ENCODE measurements at regions of chr4 and their contacts with region 1.

Region 1: GRCh38 chr4:36187723-36188333 is 56.5 kb downstream of the ARAP2 start:
- DNase-seq: peak; percentile 1
- H3K4me3 ChIP-seq: no peak overlapping the region
- H3K27ac ChIP-seq: no peak overlapping the region
- H3K4me1 ChIP-seq: no peaks in the 10 kb centered on the region
- H3K27me3 ChIP-seq: no peaks in the 10 kb centered on the region
- CTCF ChIP-seq: no peak
- POLR2A ChIP-seq: no peak

Region 2: DNA sequence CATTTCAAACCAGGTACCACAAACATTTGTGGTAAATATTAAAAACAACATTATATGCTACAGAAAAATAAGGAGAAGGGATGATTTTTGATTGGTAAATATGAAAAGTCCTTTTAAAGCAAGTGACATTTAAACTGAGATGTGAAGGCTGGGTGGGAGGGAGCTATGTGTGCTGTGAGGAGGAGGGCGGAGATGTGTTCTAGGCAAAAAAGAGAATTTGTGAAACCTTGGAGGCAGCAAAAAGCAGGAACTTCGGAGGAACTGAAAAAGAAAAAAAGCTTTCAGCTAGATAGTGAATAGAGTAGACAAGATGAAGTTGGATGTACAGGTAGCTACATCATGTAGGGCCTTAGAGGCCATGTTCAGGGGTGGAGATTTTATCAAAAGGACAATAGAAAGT is 66.5 kb after region 1 on chr4:
- CTCF ChIA-PET with region 1: no interaction called
- POLR2A ChIA-PET with region 1: interaction called, 10 read pairs
- dilution Hi-C with region 1: no loop called
- intact Hi-C with region 1: no loop called
- DNase-seq: no peak
- H3K4me3 ChIP-seq: no peak overlapping the region
- H3K27ac ChIP-seq: no peak overlapping the region
- H3K4me1 ChIP-seq: no peaks in the 10 kb centered on the region
- H3K27me3 ChIP-seq: no peaks in the 10 kb centered on the region
- CTCF ChIP-seq: no peak
- POLR2A ChIP-seq: no peak

Measured in endothelial cell of umbilical vein (primary cell).